Cardiac septum (tissue), 1 donor: ENCODE measurements at regions of chr4 and their contacts with region 1.

Region 1: DNA sequence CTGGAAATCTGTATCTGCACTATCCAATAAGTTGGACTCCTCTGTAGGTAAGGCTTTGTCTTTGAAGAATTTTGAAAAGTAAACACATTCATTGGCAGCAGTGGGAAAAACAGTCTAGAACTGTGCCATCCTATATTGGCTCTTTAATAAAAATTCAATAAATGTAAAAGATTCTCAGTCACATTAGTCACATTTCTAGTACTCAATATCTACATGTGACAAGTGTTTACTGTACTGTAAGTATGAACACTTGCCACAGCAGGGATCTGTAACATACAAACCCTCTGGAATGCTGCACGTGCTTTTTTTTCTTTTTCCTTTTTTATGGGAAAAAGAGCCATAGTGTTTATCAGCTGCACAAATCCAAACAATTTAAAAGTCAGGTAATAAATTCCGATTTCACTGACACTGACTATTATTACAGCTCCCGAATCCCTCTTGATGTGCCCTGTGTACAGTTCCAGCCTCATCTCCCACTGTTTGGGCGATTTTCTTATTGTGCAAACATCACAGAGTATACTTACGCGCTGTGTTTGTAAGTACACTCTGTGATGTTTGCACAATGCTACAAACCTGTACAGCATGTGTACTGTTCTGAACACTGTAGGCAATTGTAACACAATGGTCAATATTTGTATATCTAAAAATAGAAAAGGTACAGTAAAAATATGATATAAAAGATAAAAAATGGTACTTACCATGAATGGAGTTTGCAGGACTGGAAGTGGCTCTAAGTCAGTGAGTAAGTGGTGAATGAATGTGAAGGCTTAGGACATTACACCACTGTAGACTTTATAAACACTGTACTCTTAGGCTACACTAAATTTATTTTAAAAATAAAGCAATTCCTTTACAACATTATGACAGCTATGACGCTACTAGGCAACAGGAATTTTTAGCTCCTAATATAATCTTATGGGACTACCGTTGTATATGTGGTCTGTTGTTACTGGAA is 8.7 kb downstream of the PYURF start:
- DNase-seq: no peak

Region 2: GRCh38 chr4:88033309-88033708 is 481.5 kb before region 1 on chr4:
- intact Hi-C with region 1: loop called (anchors 10 kb)
- DNase-seq: no peak

Region 3: GRCh38 chr4:88378691-88379559 is 135.9 kb before region 1 on chr4 and contains the start of gene HERC6:
- intact Hi-C with region 1: loop called (anchors 5 kb)
- DNase-seq: peak; percentile 85
- total RNA-seq, gene HERC6: 10.0 TPM

Region 4: DNA sequence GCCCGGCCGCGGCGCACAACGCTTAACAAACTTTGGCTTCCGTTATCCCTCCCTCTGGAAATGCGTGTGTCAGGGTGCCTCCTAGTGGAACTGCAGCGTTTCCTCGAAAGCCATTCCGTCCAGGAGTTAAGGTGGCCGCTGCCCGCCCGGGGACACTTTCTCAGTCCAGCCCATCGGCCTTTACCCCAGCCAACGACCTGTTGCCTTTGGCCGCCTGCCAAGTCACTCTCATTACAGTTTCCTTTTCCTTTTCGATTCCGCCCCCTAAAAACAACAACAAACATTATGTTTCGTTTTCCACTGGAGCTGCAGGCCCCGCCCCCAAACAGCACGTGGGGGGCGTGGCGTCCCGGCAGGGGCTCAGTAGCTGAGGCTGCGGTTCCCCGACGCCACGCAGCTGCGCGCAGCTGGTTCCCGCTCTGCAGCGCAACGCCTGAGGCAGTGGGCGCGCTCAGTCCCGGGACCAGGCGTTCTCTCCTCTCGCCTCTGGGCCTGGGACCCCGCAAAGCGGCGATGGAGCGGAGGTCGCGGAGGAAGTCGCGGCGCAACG is 58.0 kb before region 1 on chr4 and contains the start of gene HERC5:
- intact Hi-C with region 1: loop called (anchors 2 kb)
- DNase-seq: peak; percentile 95
- total RNA-seq, gene HERC5: 1.9 TPM

Region 5: DNA sequence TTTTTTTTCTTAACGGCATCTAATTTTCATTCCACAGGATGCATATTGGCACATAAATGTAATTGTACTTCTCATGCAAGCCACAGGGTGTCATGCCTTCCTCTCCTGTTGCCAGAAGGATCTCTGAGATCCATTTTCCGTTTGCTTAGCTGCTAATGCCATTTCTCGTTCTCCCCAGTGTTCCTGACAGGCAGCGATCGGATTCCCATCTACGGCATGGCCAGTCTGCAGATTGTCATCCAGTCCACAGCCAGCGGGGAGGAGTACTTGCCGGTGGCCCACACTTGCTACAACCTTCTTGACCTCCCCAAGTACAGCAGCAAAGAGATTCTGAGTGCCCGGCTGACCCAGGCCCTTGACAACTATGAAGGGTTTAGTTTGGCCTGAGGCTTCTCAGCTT is 191.7 kb after region 1 on chr4:
- intact Hi-C with region 1: no loop called
- DNase-seq: no peak